ENCODE measurements at regions of chr5 and their contacts with region 1.

Region 1: DNA sequence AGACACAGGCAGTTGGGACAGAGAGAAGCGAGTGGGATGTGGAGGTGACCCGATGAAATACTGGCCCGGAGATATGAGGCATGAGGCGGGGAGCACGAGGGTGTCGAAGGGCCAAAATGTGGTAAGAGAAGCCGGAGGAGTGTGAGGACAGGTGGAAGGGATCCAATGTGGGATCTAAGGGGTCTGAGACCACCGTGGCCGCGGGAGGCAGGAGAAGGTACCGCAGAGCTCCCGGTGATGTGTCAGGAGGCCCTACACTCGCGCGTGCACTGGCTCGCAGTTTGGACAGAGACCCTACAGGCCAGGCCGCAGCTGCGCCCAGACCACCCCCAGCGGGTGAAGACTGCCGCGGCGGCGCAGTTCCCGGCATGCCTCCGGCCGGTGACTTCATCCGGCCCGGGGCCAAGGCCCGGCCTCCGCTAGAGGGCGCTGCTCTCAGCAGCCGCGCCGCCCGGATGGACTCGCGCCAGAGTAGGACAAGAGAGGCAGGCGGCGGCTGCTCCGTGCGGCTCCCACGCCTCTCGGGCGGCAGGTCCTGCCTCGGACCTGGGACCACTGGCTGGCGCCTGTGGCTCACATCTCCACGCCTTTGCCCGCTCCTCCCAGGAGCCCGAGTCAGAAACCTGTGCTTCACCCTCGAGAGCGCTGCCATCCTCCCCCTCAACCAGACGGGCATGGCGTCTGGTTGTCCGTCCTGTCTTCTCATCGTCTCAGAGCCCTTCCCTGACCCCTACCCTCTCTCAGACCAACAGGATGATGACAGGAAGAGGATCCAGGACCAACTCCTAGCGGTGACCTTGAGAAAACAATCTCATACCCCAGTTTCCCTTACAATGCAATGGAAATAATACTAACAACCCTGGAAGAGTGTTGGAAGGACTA is 35.4 kb upstream of the STING1 start:
- DNase-seq: peak in 1 of 2 donors; percentile 89
- H3K4me3 ChIP-seq: peak overlapping the region; percentile 47 to 51
- H3K27ac ChIP-seq: peak overlapping the region; percentile 91
- H3K4me1 ChIP-seq: peaks cover 12% of the 10 kb centered on the region
- H3K27me3 ChIP-seq: no peaks in the 10 kb centered on the region
- CTCF ChIP-seq: peak; percentile 77 to 96 (median 90)
- POLR2A ChIP-seq: peak in 1 of 2 donors; percentile 19

Region 2: DNA sequence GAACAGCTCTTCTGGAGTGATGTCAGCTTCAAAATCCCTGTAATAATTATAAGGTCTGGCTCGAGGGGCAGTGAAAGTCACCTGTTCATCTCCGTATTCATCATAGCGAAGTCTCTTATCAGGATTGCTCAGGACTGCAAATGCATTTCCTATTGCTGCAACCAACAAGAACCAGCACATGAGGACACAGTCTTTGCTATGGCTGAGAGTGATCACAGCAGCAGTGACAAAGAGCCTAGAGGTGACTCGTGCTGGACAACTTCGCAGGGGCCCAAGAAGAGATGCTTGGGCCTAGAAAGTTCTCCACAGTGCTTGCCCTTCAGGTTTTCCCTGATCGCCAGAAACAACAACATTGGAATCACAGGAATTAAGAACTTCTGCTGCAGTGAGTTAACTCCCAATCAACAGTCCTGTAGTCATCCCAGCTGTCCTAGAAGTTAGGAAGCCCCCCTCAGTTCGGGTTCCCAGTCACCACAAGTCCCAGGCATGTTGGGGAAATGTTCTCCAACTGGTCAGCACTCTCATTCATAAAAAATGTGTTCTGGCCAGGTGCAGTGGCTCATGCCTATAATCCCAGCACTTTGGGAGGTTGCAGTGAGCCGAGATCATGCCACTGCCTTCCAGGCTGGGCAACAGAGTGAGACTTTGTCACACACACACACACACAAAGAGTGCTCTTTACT is 91.6 kb before region 1 on chr5:
- intact Hi-C with region 1: loop called (anchors 5 kb)
- DNase-seq: no peak
- H3K4me3 ChIP-seq: no peak overlapping the region
- H3K27ac ChIP-seq: no peak overlapping the region
- H3K4me1 ChIP-seq: no peaks in the 10 kb centered on the region
- H3K27me3 ChIP-seq: no peaks in the 10 kb centered on the region
- CTCF ChIP-seq: no peak
- POLR2A ChIP-seq: no peak

Measured in vagina (tissue), 2 donors.